ENCODE measurements at regions of chr2 and their contacts with region 1.

Region 1: DNA sequence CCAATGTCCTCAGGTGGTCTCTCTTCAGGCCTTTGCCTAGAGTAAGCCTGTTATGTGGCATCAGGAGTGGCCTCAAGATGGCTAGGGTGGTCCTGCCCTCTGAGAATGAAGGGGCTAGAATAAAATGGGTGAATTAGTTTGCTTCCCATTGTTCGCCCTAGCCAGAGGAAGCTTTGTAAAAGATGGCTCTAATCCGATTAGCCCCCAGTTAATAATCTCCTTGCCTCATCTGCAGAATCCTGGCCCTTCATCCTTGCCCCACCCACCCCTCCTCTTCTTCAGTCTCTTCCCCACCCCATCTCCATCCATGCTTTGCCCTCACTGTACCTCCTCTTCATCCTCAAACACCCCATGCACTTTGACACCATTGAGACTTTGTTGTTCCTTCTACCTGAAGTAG is 57.4 kb upstream of the LGALSL start:
- DNase-seq: no peak
- H3K4me3 ChIP-seq: no peak overlapping the region
- H3K27ac ChIP-seq: no peak overlapping the region
- H3K4me1 ChIP-seq: peaks cover 12 to 21% of the 10 kb centered on the region in 2 donors
- H3K27me3 ChIP-seq: no peaks in the 10 kb centered on the region
- CTCF ChIP-seq: no peak
- POLR2A ChIP-seq: no peak

Region 2: GRCh38 chr2:63914311-63914710 is 482.2 kb before region 1 on chr2:
- intact Hi-C with region 1: no loop called
- DNase-seq: no peak
- H3K4me3 ChIP-seq: no peak overlapping the region
- H3K27ac ChIP-seq: no peak overlapping the region
- H3K4me1 ChIP-seq: no peaks in the 10 kb centered on the region
- H3K27me3 ChIP-seq: no peaks in the 10 kb centered on the region
- CTCF ChIP-seq: no peak
- POLR2A ChIP-seq: no peak

Region 3: GRCh38 chr2:64442801-64443429 is 46.4 kb after region 1 on chr2:
- intact Hi-C with region 1: loop called (anchors 5 kb)
- DNase-seq: no peak
- H3K4me3 ChIP-seq: no peak overlapping the region
- H3K27ac ChIP-seq: no peak overlapping the region
- H3K4me1 ChIP-seq: peaks cover 8 to 10% of the 10 kb centered on the region in 2 donors
- H3K27me3 ChIP-seq: no peaks in the 10 kb centered on the region
- CTCF ChIP-seq: no peak
- POLR2A ChIP-seq: no peak

Region 4: GRCh38 chr2:64635976-64636911 is 239.7 kb after region 1 on chr2:
- intact Hi-C with region 1: no loop called
- DNase-seq: no peak
- H3K4me3 ChIP-seq: no peak overlapping the region
- H3K27ac ChIP-seq: no peak overlapping the region
- H3K4me1 ChIP-seq: peaks cover 12 to 36% of the 10 kb centered on the region in 2 donors
- H3K27me3 ChIP-seq: no peaks in the 10 kb centered on the region
- CTCF ChIP-seq: no peak
- POLR2A ChIP-seq: no peak

Measured in thyroid gland (tissue), 4 donors.